ENCODE measurements at regions of chr12 and their contacts with region 1.

Region 1: DNA sequence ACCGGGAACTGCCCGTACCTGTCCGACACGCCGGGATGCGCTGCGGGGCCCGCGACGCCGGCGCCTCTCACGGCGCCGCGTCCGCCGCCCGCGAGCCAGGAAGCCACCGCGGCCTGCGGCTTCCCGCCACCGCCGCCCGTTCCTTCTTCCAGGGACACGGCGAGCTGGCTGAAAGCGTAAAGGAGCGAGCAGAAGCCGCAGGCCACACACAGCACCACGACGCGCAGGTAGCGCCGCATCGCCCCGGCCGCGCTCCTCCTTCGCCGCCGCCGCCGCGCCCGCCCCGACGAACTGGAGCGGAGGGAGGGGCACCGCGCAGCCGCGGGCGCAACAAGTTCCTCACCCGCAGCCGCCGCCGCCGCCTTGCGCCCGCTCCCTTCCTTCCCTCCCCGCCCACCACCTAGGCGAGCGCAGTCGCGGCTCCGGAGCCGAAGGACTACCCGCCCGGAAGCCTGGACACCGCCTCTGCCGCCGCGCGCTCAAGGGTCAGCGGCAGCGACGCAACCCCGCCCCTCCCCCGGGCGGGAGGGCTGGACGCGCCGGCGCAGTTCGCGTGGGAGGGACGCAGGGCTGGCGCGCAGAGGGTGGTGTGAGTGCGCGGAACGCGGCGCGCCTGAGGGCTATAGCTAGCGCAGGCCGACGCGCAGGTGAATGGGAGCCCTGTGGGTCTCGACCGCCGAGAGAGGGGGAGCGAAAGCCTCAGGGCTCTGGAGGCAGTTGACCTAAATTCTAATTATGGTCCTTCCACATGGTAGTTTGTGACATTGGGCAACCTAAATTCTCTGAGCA is at the start of gene GXYLT1:
- ATAC-seq: peak; percentile 92 to 96 (median 94)
- H3K4me3 ChIP-seq: peak within 1 kb of the TSS; percentile 58 to 80 (median 71)
- H3K27ac ChIP-seq: peak within 1 kb of the TSS; percentile 47 to 76
- H3K4me1 ChIP-seq: peaks cover 10 to 15% of the 10 kb centered on the region in 2 donors
- total RNA-seq, gene GXYLT1: 4.0 to 11.8 (median 5.8) TPM

Region 2: DNA sequence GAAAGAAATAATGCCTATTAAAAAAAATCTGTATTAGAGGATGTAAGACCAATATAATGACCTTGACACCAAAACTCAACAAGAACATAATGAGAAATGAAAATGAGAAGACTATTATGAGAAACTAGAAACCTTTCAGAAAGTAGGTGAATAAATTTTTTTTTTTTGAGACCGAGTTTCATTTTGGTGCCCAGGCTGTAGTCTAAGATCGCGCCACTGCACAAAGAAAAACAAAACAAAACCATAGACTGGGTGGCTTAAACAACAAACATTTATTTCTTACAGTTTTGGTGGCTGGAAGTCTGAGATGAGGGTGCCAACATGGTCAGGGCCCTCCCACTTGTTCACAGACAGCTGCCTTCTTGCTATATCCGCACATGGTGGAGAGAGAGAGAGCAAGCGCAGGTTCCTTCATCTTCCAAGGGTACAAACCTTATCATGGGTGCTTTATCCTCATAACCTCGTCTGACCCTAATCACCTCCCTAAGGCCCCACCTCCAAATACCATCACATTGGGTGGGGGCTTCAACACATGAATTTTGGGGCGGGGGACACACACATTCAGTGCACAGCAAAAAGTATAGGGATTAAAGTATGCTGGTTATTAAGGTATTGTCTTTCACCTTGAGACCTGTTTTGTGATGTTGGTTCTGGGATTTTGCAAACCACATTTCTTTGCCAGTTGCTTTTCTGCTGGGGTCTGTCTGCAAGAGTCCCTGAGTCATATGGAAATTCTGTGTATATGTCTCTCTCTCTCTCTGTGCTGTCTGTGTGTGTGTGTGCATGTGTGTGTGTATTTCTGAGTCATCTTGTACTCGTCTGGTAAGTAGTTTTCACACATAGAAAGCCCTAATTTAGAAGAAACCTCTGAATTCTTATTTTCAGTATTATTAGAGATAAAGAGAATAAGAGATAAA is 155.0 kb after region 1 on chr12:
- in situ Hi-C with region 1: loop called in 1 of 9 experiments (anchors 25 kb)
- ATAC-seq: peak in 4 of 8 experiments; percentile 45 to 58 (median 50)
- H3K4me3 ChIP-seq: no peak overlapping the region
- H3K27ac ChIP-seq: no peak overlapping the region
- H3K4me1 ChIP-seq: no peaks in the 10 kb centered on the region

Region 3: DNA sequence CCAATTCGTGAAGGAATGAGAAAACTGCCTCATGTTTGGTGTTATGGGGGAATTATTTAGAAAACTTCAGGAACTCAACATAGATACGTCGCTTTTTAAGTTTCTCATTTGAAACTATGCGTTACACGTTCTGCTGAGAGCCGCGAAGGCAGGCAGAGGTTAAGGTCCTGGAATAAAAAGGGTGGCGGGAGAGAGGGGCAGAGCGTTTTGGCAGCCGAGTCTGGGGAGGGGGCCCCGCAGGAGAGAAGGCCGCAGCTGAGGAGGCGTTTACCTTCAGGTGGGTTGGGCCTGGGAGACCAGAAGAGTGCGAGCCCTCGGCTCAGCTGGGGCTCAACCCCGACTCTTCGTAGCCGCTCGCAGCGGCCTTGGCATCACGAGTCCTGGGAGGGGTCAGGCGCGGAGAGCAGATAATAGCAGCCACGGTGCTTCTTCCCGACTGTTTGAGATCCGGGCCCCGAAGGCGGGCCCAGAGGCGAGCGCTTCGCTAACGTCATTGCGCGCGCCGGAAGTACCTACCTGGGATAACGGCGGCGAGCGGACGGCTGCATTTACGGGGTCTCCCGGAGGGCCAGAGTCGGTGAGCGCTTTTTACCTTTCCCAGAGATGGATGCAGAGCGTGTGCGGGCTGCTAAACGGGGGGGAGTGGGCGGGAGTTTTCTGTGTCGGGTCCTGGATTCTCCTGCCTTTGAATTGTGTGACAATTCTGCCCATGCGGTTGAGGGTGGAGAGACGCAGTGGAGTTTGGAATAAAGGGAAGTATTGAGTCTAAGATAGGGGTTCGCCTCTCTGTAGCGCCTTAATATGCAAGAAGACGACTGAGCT is 181.3 kb after region 1 on chr12 and contains the starts of genes PPHLN1 and ZCRB1:
- in situ Hi-C with region 1: loop called in 8 of 9 experiments (anchors 25 kb)
- ATAC-seq: peak; percentile 92 to 99 (median 96)
- H3K4me3 ChIP-seq: peak within 1 kb of the TSS; percentile 56 to 98 (median 79)
- H3K27ac ChIP-seq: peak within 1 kb of the TSS; percentile 53 to 87
- H3K4me1 ChIP-seq: peaks cover 8 to 17% of the 10 kb centered on the region in 2 donors
- total RNA-seq, gene PPHLN1: 42.8 to 99.0 (median 66.7) TPM
- total RNA-seq, gene ZCRB1: 34.1 to 70.0 (median 44.1) TPM

Measured in motor neuron (in vitro differentiated cells).